ENCODE measurements at regions of chr5 and their contacts with region 1.

Region 1: GRCh38 chr5:167814828-167815227 is 476.6 kb upstream of the WWC1 start:
- DNase-seq: peak; percentile 95
- H3K4me3 Mint-ChIP-seq: peak overlapping the region; percentile 11
- H3K27ac Mint-ChIP-seq: peak overlapping the region; percentile 93
- H3K4me1 Mint-ChIP-seq: peaks cover 33% of the 10 kb centered on the region
- H3K27me3 Mint-ChIP-seq: no peaks in the 10 kb centered on the region
- CTCF ChIP-seq: no peak

Region 2: DNA sequence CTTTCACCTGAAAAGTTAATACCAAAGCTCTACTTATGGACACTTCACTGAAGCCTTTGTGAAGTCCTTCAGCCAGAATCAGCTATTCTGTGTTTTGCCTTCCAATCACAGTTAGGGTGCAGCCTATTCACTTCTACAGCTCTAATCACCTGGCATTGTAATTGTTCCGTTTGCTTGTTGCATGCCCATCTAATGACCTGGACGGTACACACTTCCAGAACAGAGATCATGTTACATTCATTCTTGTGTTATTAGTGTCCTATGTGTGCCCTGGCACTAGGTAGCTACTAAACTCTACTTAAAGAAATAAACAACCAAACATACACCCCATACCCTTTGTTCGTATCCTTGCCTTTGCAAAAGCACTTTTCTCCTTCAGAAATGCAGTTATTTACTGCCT is 686.2 kb before region 1 on chr5:
- CTCF ChIA-PET with region 1: no interaction called
- POLR2A ChIA-PET with region 1: no interaction called
- intact Hi-C with region 1: no loop called
- DNase-seq: peak; percentile 51
- H3K4me3 Mint-ChIP-seq: no peak overlapping the region
- H3K27ac Mint-ChIP-seq: peak overlapping the region; percentile 14
- H3K4me1 Mint-ChIP-seq: peaks cover 10% of the 10 kb centered on the region
- H3K27me3 Mint-ChIP-seq: no peaks in the 10 kb centered on the region
- CTCF ChIP-seq: no peak

Region 3: DNA sequence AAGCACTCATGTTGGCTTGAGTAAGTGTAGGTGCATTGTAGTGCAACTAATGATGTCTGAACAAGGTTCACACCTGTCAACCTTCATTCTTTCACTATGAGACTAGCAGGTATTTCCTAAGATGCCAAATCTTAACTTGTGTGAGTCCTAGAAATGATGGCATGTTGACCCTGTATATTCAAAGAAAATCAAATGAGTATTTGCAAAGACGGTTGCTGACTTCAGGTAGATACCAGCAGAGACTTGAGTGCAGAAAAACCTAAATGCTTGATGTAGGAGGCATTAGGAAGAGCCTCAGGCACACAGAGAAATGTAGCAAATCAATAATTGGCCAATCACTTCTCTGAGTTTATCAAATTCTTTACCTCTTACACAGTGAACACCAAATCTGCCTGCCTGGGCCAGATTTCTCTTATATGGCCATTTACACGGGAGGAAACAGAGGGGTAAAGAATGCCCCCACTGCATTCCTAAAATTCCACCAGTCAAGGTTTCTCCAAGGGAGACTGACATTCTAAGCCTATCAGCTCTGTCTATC is 12.0 kb before region 1 on chr5:
- CTCF ChIA-PET with region 1: interaction called, 7 read pairs
- POLR2A ChIA-PET with region 1: interaction called, 23 read pairs
- intact Hi-C with region 1: no loop called
- DNase-seq: no peak
- H3K4me3 Mint-ChIP-seq: no peak overlapping the region
- H3K27ac Mint-ChIP-seq: no peak overlapping the region
- H3K4me1 Mint-ChIP-seq: peaks cover 12% of the 10 kb centered on the region
- H3K27me3 Mint-ChIP-seq: no peaks in the 10 kb centered on the region
- CTCF ChIP-seq: no peak

Region 4: DNA sequence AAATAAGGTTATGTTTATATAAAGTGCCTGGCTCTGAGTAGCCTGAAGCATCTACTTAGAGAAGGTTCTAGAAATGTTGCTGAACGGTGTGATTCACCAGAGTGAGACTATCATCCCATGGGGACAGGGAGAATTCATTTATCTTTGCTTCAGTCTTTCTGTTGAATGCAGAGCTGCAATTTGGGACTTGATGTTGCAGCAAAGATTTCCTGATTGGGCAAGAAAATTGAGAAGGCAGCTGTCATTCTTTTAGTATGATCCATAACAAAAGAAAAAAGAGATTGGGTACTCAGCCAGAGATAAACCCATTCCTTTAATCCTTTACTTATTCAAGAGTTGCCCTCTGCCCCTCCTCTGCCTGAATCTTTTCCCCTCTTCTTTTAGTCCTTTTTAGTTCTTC is 20.3 kb after region 1 on chr5:
- CTCF ChIA-PET with region 1: interaction called, 3 read pairs
- POLR2A ChIA-PET with region 1: interaction called, 10 read pairs
- intact Hi-C with region 1: no loop called
- DNase-seq: no peak
- H3K4me3 Mint-ChIP-seq: no peak overlapping the region
- H3K27ac Mint-ChIP-seq: no peak overlapping the region
- H3K4me1 Mint-ChIP-seq: peaks cover 11% of the 10 kb centered on the region
- H3K27me3 Mint-ChIP-seq: no peaks in the 10 kb centered on the region
- CTCF ChIP-seq: no peak

Measured in MCF 10A (cell line).